Left cardiac atrium (tissue), 4 donors: ENCODE measurements at regions of chr11 and their contacts with region 1.

Region 1: GRCh38 chr11:12235947-12236743 is 125.8 kb downstream of the MICAL2 start:
- DNase-seq: no peak
- ATAC-seq: peak; percentile 10 to 31

Region 2: DNA sequence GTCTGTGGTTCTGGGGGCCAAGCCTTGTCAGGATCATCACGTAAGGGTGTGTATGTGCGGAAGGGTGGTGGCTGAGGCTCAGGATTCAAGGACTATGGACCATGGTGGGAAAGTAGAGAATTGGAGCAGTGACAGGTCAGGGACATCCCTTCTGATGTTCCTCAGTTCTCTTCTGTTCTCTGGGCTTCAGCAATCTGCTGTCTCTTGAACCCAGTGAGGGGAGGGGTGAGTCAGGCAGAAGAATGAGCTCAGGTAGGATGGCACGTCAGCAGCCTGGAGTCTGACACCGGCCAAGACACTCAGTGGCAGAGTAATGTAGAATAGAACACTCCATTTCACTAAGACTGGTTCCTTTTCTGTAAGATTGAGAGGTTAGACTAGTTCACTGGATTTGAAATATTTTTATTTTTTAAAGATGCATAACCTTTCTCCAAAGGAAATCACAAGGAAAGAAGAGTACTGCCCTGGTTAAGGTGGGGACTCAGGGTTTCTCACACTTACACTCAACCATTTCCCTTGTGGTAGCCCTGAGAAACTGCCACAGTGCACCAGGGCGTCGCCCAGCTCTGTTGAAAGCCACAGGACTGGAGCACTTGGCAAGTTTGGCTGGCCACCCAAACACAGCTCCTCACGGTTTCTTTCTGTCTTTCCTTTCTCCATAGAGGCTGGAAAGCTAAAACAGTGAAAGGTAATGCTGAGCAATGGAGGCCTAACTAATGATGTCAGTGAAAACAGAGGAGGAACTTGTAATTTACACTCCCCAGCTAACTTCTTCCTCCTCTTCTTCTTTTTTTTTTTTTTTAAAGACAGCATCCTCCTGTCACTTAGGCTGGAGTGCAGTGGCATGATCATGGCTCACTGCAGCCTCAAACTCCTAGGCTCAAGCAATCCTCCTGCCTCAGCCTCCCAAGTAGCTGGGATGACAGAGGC is 148.8 kb before region 1 on chr11:
- intact Hi-C with region 1: loop called in 1 of 2 experiments (anchors 1 kb)
- DNase-seq: peak; percentile 48
- ATAC-seq: peak in 1 of 2 donors; percentile 42

Region 3: DNA sequence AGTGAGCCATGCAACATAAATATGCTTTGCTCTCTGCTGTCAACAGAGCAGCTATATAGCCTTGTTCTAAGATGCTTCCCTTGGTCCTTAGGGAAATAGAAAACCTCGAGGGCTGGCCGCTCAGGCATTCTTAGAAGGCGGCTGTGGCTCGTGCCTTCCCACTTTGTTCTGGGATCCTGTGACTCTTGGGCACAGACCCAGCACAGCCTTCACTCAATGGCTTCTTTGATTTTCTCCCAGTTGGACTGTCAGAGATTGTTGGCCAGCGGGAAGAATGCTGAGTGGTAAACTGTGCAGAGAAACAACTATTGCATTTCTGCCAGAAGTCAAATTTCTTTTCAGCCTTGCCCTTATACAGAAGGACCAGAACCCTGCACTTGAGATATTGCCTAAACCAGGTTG is 135.3 kb before region 1 on chr11:
- intact Hi-C with region 1: loop called in 1 of 2 experiments (anchors 10 kb)
- DNase-seq: peak; percentile 45
- ATAC-seq: peak; percentile 45 to 66

Region 4: GRCh38 chr11:12281571-12282478 is 45.7 kb after region 1 on chr11:
- intact Hi-C with region 1: loop called in 1 of 2 experiments (anchors 5 kb)
- DNase-seq: peak; percentile 86
- ATAC-seq: peak; percentile 63 to 65

Region 5: GRCh38 chr11:12303421-12304149 is 67.4 kb after region 1 on chr11:
- intact Hi-C with region 1: no loop called
- DNase-seq: no peak
- ATAC-seq: no peak